Activated CD4-positive, alpha-beta T cell treated with anti-CD3 and anti-CD28 coated beads, Interleukin-2, amount 10 ng/mL, durations not matched to agents 24 days and 14 days (primary cell): ENCODE measurements at regions of chr5 and their contacts with region 1.

Region 1: DNA sequence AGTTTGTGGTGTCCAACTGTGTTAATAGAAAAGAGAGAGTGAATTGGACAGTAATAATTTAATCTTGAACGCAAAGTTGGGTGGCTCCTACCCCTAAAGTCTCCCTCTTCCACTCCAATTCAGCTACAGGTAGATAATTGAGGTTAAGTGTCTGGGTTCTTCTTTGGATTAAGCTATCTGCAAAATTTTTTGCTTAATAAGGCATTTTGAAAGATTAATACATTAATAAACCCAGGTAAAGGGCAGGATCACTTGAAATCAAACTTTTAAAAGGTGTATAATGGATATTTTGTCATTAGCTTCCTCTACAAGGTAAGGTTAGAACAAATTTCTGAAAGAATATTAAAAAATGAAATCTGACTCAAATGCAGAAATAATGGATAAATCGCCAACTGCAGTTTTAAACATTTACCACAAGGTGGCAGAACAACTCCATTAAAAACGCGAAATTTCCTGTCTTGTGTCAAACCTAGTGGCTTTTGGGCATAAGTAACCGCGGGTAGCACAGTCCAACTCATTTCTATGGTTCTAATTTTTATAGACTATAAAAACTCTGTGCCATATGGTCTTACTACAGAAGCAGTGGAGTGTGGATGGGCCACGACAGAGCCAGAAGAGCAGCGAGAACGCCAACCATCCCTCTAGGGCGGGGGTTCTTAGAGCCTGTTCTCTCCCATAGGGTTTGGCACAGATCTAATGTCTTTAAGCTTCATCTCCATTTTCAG is 276.5 kb downstream of the ARHGEF28 start:
- DNase-seq: peak; percentile 70
- H3K4me3 Mint-ChIP-seq: no peak overlapping the region
- H3K27ac Mint-ChIP-seq: no peak overlapping the region
- H3K4me1 Mint-ChIP-seq: peaks cover 4% of the 10 kb centered on the region
- H3K27me3 Mint-ChIP-seq: peaks cover 26% of the 10 kb centered on the region

Region 2: DNA sequence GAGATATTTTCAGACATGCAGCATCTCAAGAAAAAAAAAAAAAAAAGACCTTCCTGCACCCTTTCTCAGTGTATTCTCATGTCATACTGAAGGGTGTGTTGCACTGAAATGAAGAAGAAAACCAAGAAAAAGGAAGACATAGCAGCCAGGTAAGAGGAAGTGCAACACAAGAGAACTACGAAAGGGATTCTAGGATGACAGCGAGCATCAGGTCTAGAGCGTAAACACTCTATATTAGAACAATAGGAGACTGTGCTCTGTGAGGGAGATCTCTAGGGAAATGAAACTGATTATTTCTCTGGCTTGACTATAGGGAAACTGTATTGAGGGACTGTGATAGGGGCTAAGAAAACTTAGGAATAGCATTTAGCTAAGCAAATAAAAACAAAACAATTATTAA is 374.2 kb before region 1 on chr5:
- intact Hi-C with region 1: no loop called
- DNase-seq: no peak
- H3K4me3 Mint-ChIP-seq: no peak overlapping the region
- H3K27ac Mint-ChIP-seq: no peak overlapping the region
- H3K4me1 Mint-ChIP-seq: no peaks in the 10 kb centered on the region
- H3K27me3 Mint-ChIP-seq: peaks cover 38% of the 10 kb centered on the region

Region 3: DNA sequence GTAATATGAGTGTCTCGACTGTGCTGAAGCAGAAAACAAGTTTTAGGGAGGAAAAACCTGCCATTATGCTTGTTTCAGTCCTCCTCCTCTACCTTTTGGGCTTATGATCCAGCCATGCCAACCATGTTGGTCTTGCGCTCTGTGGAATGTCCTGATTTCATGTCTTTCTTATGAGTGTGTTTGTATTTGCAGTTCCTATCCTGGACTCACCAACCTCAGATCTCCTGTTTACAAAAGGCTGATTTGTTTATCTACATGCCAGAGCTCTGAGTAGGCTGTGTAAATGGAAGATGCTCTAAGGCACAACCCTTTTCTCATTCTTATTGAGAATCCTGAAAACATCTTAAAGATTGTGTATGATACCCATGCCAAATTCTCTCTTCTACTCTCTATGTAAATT is 137.9 kb before region 1 on chr5:
- intact Hi-C with region 1: no loop called
- DNase-seq: no peak
- H3K4me3 Mint-ChIP-seq: no peak overlapping the region
- H3K27ac Mint-ChIP-seq: no peak overlapping the region
- H3K4me1 Mint-ChIP-seq: no peaks in the 10 kb centered on the region
- H3K27me3 Mint-ChIP-seq: peaks cover 2% of the 10 kb centered on the region

Region 4: DNA sequence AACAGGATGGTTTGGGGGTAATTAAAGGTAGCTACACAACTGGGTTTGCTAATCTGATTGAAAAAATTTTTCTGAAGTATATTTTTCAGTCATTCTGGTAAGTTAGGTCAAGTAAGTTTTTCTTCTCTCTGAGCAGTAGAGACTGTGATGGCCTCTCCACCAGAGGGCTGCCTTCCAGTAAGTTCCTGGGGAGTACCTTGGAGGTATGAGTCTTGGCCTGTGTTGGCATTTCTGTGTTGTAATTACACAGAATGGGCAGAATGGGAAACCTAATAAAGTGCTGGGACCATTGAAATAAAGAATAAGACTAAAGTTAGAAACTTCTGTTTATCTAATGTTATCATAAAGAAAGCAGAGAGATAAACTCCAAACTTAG is 154.3 kb after region 1 on chr5:
- intact Hi-C with region 1: loop called (anchors 10 kb)
- DNase-seq: no peak
- H3K4me3 Mint-ChIP-seq: no peak overlapping the region
- H3K27ac Mint-ChIP-seq: no peak overlapping the region
- H3K4me1 Mint-ChIP-seq: no peaks in the 10 kb centered on the region
- H3K27me3 Mint-ChIP-seq: peaks cover 7% of the 10 kb centered on the region

Region 5: GRCh38 chr5:74316064-74316679 is 413.7 kb after region 1 on chr5:
- intact Hi-C with region 1: loop called (anchors 10 kb)
- DNase-seq: no peak
- H3K4me3 Mint-ChIP-seq: no peak overlapping the region
- H3K27ac Mint-ChIP-seq: no peak overlapping the region
- H3K4me1 Mint-ChIP-seq: no peaks in the 10 kb centered on the region
- H3K27me3 Mint-ChIP-seq: peaks cover 5% of the 10 kb centered on the region

Region 6: GRCh38 chr5:74648835-74649293 is 746.4 kb after region 1 on chr5:
- intact Hi-C with region 1: loop called (anchors 1 kb)
- DNase-seq: peak; percentile 83
- H3K4me3 Mint-ChIP-seq: no peak overlapping the region
- H3K27ac Mint-ChIP-seq: no peak overlapping the region
- H3K4me1 Mint-ChIP-seq: peaks cover 1% of the 10 kb centered on the region
- H3K27me3 Mint-ChIP-seq: peaks cover 35% of the 10 kb centered on the region

Region 7: DNA sequence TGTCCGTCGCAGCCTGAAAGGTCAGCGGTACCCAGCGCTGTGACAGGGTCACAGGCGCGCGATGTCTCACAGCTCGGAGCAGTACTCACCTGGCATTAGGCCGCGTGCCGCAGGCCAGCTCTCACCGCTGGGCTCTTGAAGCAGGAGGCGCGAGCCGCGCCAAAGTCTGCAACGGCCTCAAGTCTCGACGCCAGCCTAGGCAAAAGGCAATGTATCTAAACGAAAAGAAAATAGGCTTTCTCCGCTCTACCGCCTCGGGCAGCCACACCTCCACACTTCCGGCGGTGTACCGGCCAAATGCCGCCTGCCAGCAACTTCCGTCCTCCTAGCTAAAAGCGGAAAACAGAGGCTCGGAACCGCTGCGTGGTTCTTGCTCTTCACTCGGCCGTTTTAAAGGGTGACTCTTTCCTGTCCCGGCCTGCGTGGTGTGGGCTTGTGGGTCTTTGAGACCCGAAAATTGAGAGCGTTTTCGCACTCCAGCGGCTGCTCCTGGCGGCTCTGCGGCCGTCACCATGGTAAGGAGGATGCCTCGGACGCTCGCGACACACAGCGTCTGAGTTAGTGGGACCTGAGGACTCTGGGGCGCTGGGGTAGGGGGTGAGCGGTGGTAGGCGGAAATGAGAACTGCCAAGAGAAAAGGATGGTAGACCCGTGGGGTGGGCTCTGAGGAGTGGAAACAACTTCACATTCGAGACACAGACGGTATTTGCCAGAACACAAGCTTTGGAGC is 864.5 kb after region 1 on chr5 and contains the starts of genes GFM2 and NSA2:
- intact Hi-C with region 1: loop called (anchors 10 kb)
- DNase-seq: peak; percentile 98
- H3K4me3 Mint-ChIP-seq: peak within 1 kb of the TSS; percentile 99
- H3K27ac Mint-ChIP-seq: peak within 1 kb of the TSS; percentile 98
- H3K4me1 Mint-ChIP-seq: peaks cover 25% of the 10 kb centered on the region
- H3K27me3 Mint-ChIP-seq: no peaks in the 10 kb centered on the region
- total RNA-seq, gene GFM2: 37.9 and 42.7 TPM in 2 replicates
- total RNA-seq, gene NSA2: 94.0 and 95.8 TPM in 2 replicates

Region 8: GRCh38 chr5:74919487-74919886 is 1017.0 kb after region 1 on chr5:
- intact Hi-C with region 1: loop called (anchors 5 kb)
- DNase-seq: peak; percentile 58
- H3K4me3 Mint-ChIP-seq: no peak overlapping the region
- H3K27ac Mint-ChIP-seq: no peak overlapping the region
- H3K4me1 Mint-ChIP-seq: no peaks in the 10 kb centered on the region
- H3K27me3 Mint-ChIP-seq: peaks cover 4% of the 10 kb centered on the region